ENCODE measurements at regions of chr1 and their contacts with region 1.

Region 1: DNA sequence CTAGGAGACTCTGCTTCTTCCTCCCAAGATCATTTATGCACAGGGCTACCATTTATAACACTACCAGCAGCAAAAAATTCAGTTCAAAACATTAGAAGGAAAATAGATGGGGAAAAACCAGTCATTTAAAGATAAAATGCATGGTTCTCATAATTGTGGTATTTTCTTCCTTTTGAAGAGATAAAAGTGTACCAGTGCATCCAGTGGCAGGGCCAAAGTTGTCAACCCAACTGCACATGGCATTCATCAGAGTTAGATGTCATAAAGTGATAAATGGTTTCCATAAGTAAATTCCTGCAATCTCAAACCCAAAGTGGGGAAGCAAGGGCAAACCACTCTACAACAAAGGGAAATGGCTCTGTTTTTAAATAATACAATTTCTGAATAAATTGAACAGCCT is 119.1 kb upstream of the DMRTA2 start:
- DNase-seq: no peak
- H3K4me3 Mint-ChIP-seq: no peak overlapping the region
- H3K27ac Mint-ChIP-seq: no peak overlapping the region
- H3K4me1 Mint-ChIP-seq: no peaks in the 10 kb centered on the region
- H3K27me3 Mint-ChIP-seq: no peaks in the 10 kb centered on the region
- CTCF ChIP-seq: no peak

Region 2: GRCh38 chr1:50491142-50491541 is 51.2 kb before region 1 on chr1:
- CTCF ChIA-PET with region 1: no interaction called
- intact Hi-C with region 1: loop called (anchors 10 kb)
- DNase-seq: no peak
- H3K4me3 Mint-ChIP-seq: no peak overlapping the region
- H3K27ac Mint-ChIP-seq: no peak overlapping the region
- H3K4me1 Mint-ChIP-seq: no peaks in the 10 kb centered on the region
- H3K27me3 Mint-ChIP-seq: no peaks in the 10 kb centered on the region
- CTCF ChIP-seq: no peak

Region 3: GRCh38 chr1:50684185-50684584 is 141.8 kb after region 1 on chr1:
- CTCF ChIA-PET with region 1: no interaction called
- intact Hi-C with region 1: no loop called
- DNase-seq: no peak
- H3K4me3 Mint-ChIP-seq: no peak overlapping the region
- H3K27ac Mint-ChIP-seq: no peak overlapping the region
- H3K4me1 Mint-ChIP-seq: no peaks in the 10 kb centered on the region
- H3K27me3 Mint-ChIP-seq: no peaks in the 10 kb centered on the region
- CTCF ChIP-seq: no peak

Measured in Calu3 (cell line).